Left cardiac atrium (tissue), 4 donors: ENCODE measurements at regions of chr15 and their contacts with region 1.

Region 1: DNA sequence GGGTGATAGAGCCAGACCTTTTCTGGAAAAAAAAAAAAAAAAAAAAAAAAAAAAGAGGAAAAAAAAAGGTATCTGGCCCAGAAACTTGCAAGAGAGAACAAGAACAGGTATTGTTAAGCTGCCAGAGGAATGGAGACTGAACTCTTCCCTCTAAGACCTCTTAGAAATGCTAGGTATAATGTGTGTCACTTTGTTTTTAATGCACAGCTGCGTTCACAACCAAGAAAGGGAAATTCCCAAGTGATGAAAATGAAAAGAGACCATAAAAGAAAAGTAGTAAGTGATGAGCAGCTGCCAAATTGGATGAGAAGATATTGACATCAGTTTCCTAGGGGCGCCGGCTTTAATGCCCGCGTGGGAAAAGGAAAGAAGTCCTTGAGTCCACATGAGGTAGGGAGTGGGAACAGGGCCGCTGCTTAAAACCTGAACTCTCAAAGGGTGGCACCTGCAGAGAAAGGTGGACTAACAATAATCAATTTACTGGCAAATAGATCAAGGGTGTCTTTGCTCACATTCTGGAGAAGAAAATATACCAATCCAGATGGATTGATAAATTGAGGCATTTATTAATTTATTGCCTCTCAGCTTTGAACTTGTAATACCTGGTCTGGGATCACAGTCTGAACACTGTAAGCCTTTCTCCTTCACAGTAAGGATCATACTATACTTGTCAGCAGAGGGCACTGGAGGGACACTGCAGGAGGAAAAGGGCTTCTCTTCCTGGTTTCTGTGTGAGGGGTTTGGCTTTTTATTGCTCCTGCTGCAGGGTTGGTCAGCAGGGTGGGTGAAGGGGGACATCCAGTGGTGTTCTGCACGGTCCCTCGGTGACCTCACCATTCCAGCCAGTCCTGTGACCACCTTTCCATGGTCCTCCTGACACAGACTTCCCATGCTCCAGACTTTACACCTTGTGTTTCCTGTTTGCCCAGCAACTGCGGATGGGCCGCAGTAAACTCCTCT is 131.6 kb downstream of the AQP9 start:
- DNase-seq: no peak
- ATAC-seq: peak; percentile 88 to 93

Region 2: GRCh38 chr15:58666957-58667356 is 397.2 kb after region 1 on chr15:
- intact Hi-C with region 1: loop called in 1 of 2 experiments (anchors 10 kb)
- DNase-seq: no peak
- ATAC-seq: no peak